ENCODE measurements at regions of chr10 and their contacts with region 1.

Region 1: GRCh38 chr10:3873728-3874461 is 88.9 kb upstream of the KLF6 start:
- DNase-seq: peak; percentile 67 to 93 (median 90)
- H3K4me3 ChIP-seq: no peak overlapping the region
- H3K4me3 Mint-ChIP-seq: peak overlapping the region; percentile 9 to 72 (median 63)
- H3K27ac ChIP-seq: peak overlapping the region; percentile 94
- H3K27ac Mint-ChIP-seq: peak overlapping the region; percentile 96 to 100 (median 99)
- H3K4me1 ChIP-seq: peaks cover 68% of the 10 kb centered on the region
- H3K4me1 Mint-ChIP-seq: peaks cover 49 to 76% (median 66%) of the 10 kb centered on the region in 4 donors
- H3K27me3 ChIP-seq: no peaks in the 10 kb centered on the region
- H3K27me3 Mint-ChIP-seq: no peaks in the 10 kb centered on the region

Region 2: DNA sequence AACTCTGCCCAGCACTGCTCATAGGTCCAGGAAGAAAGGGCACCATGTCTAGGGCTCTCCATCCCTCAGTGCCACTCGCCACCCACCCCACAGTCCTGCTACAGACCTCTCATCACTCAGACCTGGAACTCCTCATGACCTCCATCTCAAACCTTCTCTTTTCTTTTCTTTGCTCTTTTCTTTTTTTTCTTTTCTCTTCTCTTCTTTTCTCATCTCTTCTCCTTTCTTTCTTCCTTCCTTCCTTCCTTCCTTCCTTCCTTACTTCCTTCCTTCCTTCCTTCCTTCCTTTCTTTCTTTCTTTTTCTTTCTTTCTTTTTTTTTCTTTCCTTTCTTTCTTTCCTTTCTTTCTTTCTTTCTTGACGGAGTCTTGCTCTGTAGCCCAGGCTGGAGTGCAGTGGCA is 211.1 kb before region 1 on chr10:
- CTCF ChIA-PET with region 1: no interaction called
- POLR2A ChIA-PET with region 1: no interaction called
- intact Hi-C with region 1: no loop called
- DNase-seq: no peak
- H3K4me3 ChIP-seq: no peak overlapping the region
- H3K4me3 Mint-ChIP-seq: no peak overlapping the region
- H3K27ac ChIP-seq: no peak overlapping the region
- H3K27ac Mint-ChIP-seq: no peak overlapping the region
- H3K4me1 ChIP-seq: peaks cover 23% of the 10 kb centered on the region
- H3K4me1 Mint-ChIP-seq: peaks cover 11 to 24% (median 19%) of the 10 kb centered on the region in 4 donors
- H3K27me3 ChIP-seq: no peaks in the 10 kb centered on the region
- H3K27me3 Mint-ChIP-seq: no peaks in the 10 kb centered on the region

Region 3: DNA sequence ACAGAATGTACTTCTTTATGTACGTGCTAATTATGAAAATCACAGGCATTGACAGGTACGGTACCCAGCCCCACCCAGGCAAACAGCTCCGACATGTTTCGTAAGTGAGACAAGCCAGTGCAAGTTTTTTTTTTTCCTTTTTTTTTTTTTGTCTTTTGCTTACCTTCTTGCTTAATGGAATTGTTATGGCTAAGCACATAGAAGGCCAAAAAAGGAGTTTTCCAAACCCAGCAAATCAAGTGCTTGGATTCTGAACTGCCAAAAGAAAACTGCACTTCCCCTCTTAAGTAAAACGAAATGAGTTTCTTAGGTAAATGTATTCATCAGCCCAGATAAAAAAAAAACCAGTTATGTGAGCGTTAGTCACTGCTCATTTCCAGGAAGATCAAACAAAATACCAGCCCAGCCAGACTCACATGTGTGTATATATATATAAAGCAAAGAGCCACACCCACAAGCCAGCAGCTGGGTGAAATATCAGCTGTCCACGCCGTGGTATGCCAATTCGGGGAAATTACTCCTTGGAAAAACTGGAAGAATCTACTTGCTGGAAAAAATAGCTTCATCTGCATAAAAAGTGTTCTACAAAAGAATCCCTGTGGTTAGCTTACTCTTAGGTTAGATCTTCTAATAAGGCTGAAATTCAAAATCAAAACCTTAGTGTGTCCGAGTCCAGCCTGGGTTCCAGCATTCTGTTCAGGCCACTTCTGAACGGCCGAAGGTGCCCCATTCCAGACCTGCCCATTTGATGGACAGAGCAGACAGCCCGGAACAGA is 96.9 kb before region 1 on chr10:
- CTCF ChIA-PET with region 1: interaction called, 14 read pairs
- POLR2A ChIA-PET with region 1: interaction called, 509 read pairs
- intact Hi-C with region 1: no loop called
- DNase-seq: peak; percentile 75 to 87 (median 81)
- H3K4me3 ChIP-seq: peak overlapping the region in 1 of 2 donors; percentile 6
- H3K4me3 Mint-ChIP-seq: peak overlapping the region; percentile 22 to 97 (median 70)
- H3K27ac ChIP-seq: peak overlapping the region; percentile 48
- H3K27ac Mint-ChIP-seq: peak overlapping the region; percentile 63 to 100 (median 97)
- H3K4me1 ChIP-seq: peaks cover 81% of the 10 kb centered on the region
- H3K4me1 Mint-ChIP-seq: peaks cover 51 to 84% (median 68%) of the 10 kb centered on the region in 4 donors
- H3K27me3 ChIP-seq: no peaks in the 10 kb centered on the region
- H3K27me3 Mint-ChIP-seq: no peaks in the 10 kb centered on the region

Region 4: GRCh38 chr10:3811291-3811870 is 62.5 kb before region 1 on chr10:
- CTCF ChIA-PET with region 1: interaction called, 6 read pairs
- POLR2A ChIA-PET with region 1: interaction called, 189 read pairs
- intact Hi-C with region 1: no loop called
- DNase-seq: peak; percentile 49 to 79 (median 66)
- H3K4me3 ChIP-seq: peak overlapping the region; percentile 1 to 39
- H3K4me3 Mint-ChIP-seq: peak overlapping the region; percentile 76 to 87 (median 82)
- H3K27ac ChIP-seq: peak overlapping the region; percentile 99
- H3K27ac Mint-ChIP-seq: no peak overlapping the region
- H3K4me1 ChIP-seq: peaks cover 79% of the 10 kb centered on the region
- H3K4me1 Mint-ChIP-seq: peaks cover 18 to 89% (median 66%) of the 10 kb centered on the region in 4 donors
- H3K27me3 ChIP-seq: no peaks in the 10 kb centered on the region
- H3K27me3 Mint-ChIP-seq: no peaks in the 10 kb centered on the region

Region 5: GRCh38 chr10:3852147-3852904 is 21.6 kb before region 1 on chr10:
- CTCF ChIA-PET with region 1: no interaction called
- POLR2A ChIA-PET with region 1: interaction called, 67 read pairs
- intact Hi-C with region 1: no loop called
- DNase-seq: peak; percentile 64 to 95 (median 79)
- H3K4me3 ChIP-seq: no peak overlapping the region
- H3K4me3 Mint-ChIP-seq: peak overlapping the region in 6 of 8 donors; percentile 17 to 72 (median 60)
- H3K27ac ChIP-seq: peak overlapping the region; percentile 59
- H3K27ac Mint-ChIP-seq: peak overlapping the region; percentile 81 to 98 (median 92)
- H3K4me1 ChIP-seq: peaks cover 29% of the 10 kb centered on the region
- H3K4me1 Mint-ChIP-seq: peaks cover 15 to 45% (median 30%) of the 10 kb centered on the region in 4 donors
- H3K27me3 ChIP-seq: no peaks in the 10 kb centered on the region
- H3K27me3 Mint-ChIP-seq: no peaks in the 10 kb centered on the region

Region 6: DNA sequence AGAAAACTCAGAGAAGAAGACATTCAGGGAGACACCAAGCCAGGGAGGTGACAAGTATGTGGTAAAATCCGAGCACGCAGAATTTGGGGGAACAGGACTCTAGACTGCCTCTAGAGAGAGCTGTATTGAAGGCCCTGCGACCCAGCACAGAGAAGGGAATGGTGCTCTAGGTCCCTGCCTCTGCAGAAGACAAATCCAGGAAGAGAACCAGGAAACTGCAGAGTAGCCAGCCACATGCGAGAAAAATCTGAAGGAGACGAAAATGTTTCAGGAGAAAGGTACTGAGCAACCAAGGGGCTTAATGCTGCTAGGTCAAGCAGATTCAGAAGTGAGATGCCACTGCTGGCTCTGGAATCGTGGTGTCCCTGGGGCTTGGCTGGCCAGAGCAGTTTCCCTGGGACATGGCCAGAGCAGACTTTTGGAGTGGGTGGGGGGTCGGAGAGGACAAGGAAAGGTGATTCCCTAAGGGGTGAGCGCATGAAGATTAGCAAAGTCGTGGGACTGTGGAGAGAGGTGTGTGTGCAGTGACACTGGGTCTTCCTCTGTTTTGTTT is 69.1 kb after region 1 on chr10:
- CTCF ChIA-PET with region 1: no interaction called
- POLR2A ChIA-PET with region 1: interaction called, 14 read pairs
- intact Hi-C with region 1: loop called (anchors 2 kb)
- DNase-seq: no peak
- H3K4me3 ChIP-seq: no peak overlapping the region
- H3K4me3 Mint-ChIP-seq: peak overlapping the region; percentile 47 to 81 (median 72)
- H3K27ac ChIP-seq: peak overlapping the region; percentile 30
- H3K27ac Mint-ChIP-seq: peak overlapping the region; percentile 65 to 96 (median 90)
- H3K4me1 ChIP-seq: peaks cover 50% of the 10 kb centered on the region
- H3K4me1 Mint-ChIP-seq: peaks cover 36 to 69% (median 53%) of the 10 kb centered on the region in 4 donors
- H3K27me3 ChIP-seq: no peaks in the 10 kb centered on the region
- H3K27me3 Mint-ChIP-seq: no peaks in the 10 kb centered on the region

Region 7: DNA sequence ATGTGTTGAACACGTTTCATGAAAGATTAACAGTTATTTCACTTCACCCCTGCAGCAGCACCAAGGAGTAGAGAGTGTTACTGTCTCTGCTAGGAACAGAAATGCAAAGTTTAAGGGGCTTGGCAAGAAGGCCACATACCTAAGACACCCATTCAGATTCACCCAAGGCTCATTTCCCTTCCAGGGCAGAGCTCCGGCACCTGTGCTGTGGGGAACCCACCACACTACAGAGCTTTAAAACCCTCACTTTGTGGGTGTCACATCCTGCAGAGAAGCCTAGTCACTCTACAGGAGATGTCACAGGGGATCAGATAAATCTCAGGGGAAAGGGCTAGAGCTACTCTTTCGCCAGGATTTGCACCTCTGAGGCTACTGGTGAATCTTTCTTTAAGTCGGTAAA is 87.2 kb after region 1 on chr10:
- CTCF ChIA-PET with region 1: interaction called, 3 read pairs
- POLR2A ChIA-PET with region 1: interaction called, 10 read pairs
- intact Hi-C with region 1: no loop called
- DNase-seq: peak; percentile 57 to 79 (median 71)
- H3K4me3 ChIP-seq: no peak overlapping the region
- H3K4me3 Mint-ChIP-seq: peak overlapping the region; percentile 12 to 82 (median 58)
- H3K27ac ChIP-seq: peak overlapping the region; percentile 19
- H3K27ac Mint-ChIP-seq: peak overlapping the region; percentile 81 to 90 (median 88)
- H3K4me1 ChIP-seq: peaks cover 26% of the 10 kb centered on the region
- H3K4me1 Mint-ChIP-seq: peaks cover 26 to 51% (median 28%) of the 10 kb centered on the region in 4 donors
- H3K27me3 ChIP-seq: no peaks in the 10 kb centered on the region
- H3K27me3 Mint-ChIP-seq: no peaks in the 10 kb centered on the region

Region 8: DNA sequence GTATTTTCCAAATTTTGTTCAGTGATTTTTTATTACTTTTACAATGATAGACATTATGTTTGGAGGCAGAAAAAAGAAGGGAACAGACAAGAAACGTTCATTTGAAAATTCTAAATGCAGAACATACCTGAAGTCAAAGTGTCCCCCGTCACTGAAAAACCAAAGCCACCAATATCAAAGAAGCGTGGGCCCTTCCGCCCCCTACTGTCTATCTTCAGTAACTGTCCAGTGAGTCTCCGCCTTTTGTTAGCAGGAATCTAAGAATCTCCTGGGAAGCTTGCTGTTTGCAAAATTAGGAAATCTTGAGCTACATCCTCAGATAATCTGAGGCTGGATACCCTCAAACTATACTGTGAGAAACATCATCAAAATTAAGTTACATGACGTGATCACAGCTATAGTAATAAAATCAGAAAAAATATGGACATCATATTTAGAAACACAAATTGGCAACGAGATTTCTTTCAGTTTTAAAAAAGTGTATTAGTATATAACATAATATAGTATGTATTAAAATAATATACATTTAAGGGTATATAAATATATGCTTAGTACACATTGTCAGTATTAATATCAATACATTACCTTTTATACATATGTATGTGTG is 782.8 kb after region 1 on chr10:
- CTCF ChIA-PET with region 1: interaction called, 3 read pairs
- POLR2A ChIA-PET with region 1: no interaction called
- intact Hi-C with region 1: loop called (anchors 10 kb)
- DNase-seq: peak in 4 of 5 donors; percentile 50 to 61 (median 58)
- H3K4me3 ChIP-seq: no peak overlapping the region
- H3K4me3 Mint-ChIP-seq: no peak overlapping the region
- H3K27ac ChIP-seq: no peak overlapping the region
- H3K27ac Mint-ChIP-seq: no peak overlapping the region
- H3K4me1 ChIP-seq: peaks cover 7% of the 10 kb centered on the region
- H3K4me1 Mint-ChIP-seq: peaks cover 9 to 10% (median 10%) of the 10 kb centered on the region in 4 donors
- H3K27me3 ChIP-seq: no peaks in the 10 kb centered on the region
- H3K27me3 Mint-ChIP-seq: peaks cover 1 to 4% of the 10 kb centered on the region in 2 donors

Measured in CD4-positive, alpha-beta memory T cell (primary cell).